ENCODE measurements at regions of chr4 and their contacts with region 1.

Region 1: DNA sequence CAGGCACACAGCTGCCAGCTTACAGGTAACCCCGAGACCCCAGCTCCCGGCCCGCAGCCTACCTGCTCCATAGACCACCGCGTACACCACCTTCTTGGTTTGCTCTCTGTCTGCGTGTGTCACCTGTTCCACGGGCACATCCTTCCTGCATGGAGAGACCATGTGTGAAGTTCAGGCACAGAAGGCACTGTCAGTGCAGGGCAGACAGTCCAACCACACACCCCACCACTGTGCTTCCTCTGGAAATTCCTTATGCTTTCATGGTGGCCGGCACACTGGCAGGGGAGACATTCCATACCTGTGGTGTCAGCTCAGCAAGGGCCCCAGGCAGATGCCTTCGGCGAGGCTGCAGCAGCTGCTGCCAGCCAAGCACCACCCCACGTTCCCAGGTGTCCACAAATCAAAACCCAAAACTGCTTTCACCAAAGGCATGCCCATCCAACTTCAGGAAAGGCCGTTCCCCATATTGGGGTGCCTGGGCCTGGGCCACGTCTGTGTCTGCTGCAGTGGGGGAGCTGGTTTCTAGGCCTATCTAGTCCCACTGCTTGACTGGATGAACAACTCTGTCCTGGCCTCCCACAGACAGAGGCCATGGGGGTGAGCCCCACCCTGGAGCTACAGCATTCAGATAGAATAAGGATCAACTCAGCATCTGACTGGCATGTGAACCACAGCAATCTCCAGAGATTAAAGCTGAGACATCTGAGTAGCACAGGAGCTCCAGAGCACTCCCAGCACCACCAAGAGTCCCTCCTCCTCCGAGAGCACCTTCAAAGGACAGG is 36.9 kb downstream of the NAT8L start:
- DNase-seq: peak; percentile 64

Region 2: GRCh38 chr4:2436301-2436700 is 340.3 kb after region 1 on chr4:
- intact Hi-C with region 1: loop called in 1 of 2 experiments (anchors 5 kb)
- DNase-seq: no peak

Measured in posterior vena cava (tissue), 2 donors.